ENCODE measurements at regions of chr19 and their contacts with region 1.

Region 1: GRCh38 chr19:1825909-1826556 is 14.0 kb upstream of the ATP8B3 start:
- DNase-seq: peak; percentile 84 to 92
- ATAC-seq: peak; percentile 76
- H3K4me3 ChIP-seq: no peak overlapping the region
- H3K27ac ChIP-seq: no peak overlapping the region
- H3K4me1 ChIP-seq: no peaks in the 10 kb centered on the region
- H3K27me3 ChIP-seq: no peaks in the 10 kb centered on the region

Region 2: DNA sequence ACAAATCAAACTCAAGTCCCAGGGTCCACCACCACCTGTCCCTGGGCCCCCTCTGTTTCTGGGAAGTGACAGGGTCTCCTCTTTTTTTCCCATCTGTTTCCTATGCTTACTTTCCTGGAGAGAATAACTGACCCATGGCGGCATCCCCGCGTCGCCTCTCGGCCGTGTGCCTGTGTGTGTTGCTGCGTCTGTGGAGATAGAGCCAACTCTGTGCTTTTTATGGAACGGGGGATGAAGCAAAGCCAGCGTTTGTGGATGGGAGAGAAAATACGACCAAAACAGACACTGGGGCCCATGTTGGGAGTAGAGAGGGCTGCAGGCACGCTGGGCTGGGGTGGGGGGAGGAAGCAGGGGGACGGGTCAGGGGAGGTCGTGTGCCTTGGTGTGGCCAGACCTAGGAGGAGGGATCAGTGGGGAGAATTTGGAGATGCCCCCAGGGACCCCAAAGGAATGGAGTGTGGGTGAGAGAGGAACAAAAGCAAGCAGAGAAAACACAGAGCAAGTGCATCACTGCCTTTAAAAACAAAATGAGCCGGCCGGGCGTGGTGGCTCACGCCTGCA is 285.6 kb before region 1 on chr19:
- intact Hi-C with region 1: loop called in 1 of 2 experiments (anchors 10 kb)
- DNase-seq: peak in 1 of 2 donors; percentile 63
- ATAC-seq: peak; percentile 62
- H3K4me3 ChIP-seq: no peak overlapping the region
- H3K27ac ChIP-seq: no peak overlapping the region
- H3K4me1 ChIP-seq: no peaks in the 10 kb centered on the region
- H3K27me3 ChIP-seq: no peaks in the 10 kb centered on the region

Region 3: DNA sequence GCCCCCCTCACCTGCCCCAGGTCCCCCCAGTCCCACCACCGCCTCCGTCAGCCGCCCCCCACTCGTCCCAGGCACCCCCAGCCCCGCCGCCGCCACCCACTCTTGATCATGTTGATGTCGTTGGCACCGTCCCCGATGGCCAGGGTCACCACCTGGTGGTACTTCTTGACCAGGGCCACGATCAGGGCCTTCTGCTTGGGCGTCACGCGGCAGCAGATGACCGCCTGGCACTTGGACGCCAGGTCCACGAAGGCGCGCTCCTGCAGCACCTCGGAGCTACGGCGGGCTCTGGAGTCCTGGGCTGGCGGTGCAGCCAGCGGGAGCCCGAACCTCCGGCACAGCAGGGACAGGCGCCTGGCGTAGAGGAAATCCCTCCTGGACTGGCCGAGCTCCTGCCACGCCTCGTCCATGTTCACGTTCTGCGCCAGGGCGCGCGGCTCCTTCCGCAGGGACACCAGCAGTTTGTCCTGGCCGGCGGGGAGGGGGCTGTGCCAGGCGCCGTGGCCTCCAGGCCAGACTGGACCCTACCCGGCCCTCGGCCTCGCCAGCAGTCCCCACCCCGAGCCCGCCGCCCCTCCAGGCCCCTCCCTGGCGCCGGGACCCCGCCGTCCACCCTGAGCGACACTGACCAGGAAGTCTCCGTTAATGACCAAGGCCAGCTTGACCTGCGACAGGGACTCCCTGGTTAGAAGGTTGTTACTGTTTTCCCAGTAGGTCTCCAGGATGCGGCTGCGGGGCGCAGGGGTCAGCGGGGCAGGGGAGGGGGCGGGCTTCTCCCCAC is 36.6 kb before region 1 on chr19:
- intact Hi-C with region 1: loop called in 1 of 2 experiments (anchors 5 kb)
- DNase-seq: no peak
- ATAC-seq: no peak
- H3K4me3 ChIP-seq: no peak overlapping the region
- H3K27ac ChIP-seq: no peak overlapping the region
- H3K4me1 ChIP-seq: no peaks in the 10 kb centered on the region
- H3K27me3 ChIP-seq: no peaks in the 10 kb centered on the region

Region 4: GRCh38 chr19:1929021-1929742 is 103.1 kb after region 1 on chr19:
- intact Hi-C with region 1: no loop called
- DNase-seq: peak; percentile 86 to 93
- ATAC-seq: peak; percentile 92
- H3K4me3 ChIP-seq: no peak overlapping the region
- H3K27ac ChIP-seq: no peak overlapping the region
- H3K4me1 ChIP-seq: no peaks in the 10 kb centered on the region
- H3K27me3 ChIP-seq: no peaks in the 10 kb centered on the region